Mammary epithelial cell (primary cell): ENCODE measurements at regions of chr7 and their contacts with region 1.

Region 1: DNA sequence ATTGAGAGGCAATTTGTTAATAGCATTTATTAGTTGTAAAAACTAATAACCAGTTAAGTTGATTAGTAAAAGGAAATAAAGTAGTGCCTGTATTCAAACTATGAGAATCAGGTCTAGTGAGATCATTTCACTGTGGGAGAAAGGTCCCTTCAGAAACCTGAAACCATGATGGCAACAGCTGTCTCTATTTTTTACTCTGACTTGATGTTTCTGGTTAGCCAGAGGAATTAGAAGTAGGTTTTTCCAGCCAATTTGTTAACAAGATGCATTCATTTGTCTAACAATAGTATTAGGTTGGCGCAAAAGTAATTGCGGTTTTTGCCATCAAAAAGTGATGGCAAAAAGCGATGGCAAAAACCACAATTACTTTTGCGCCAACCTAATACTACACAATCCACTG is 272.2 kb upstream of the YAE1 start:
- DNase-seq: no peak
- H3K4me3 ChIP-seq: no peak overlapping the region
- H3K27ac ChIP-seq: no peak overlapping the region
- H3K4me1 ChIP-seq: no peaks in the 10 kb centered on the region
- H3K27me3 ChIP-seq: no peaks in the 10 kb centered on the region
- CTCF ChIP-seq: no peak

Region 2: GRCh38 chr7:39252916-39253315 is 41.1 kb before region 1 on chr7:
- CTCF ChIA-PET with region 1: no interaction called
- dilution Hi-C with region 1: loop called (anchors 5 kb)
- in situ Hi-C with region 1: no loop called
- intact Hi-C with region 1: no loop called
- DNase-seq: no peak
- H3K4me3 ChIP-seq: no peak overlapping the region
- H3K27ac ChIP-seq: no peak overlapping the region
- H3K4me1 ChIP-seq: no peaks in the 10 kb centered on the region
- H3K27me3 ChIP-seq: no peaks in the 10 kb centered on the region
- CTCF ChIP-seq: no peak

Region 3: GRCh38 chr7:39321909-39322498 is 28.0 kb after region 1 on chr7:
- CTCF ChIA-PET with region 1: no interaction called
- dilution Hi-C with region 1: no loop called
- in situ Hi-C with region 1: no loop called
- intact Hi-C with region 1: no loop called
- DNase-seq: no peak
- H3K4me3 ChIP-seq: no peak overlapping the region
- H3K27ac ChIP-seq: no peak overlapping the region
- H3K4me1 ChIP-seq: no peaks in the 10 kb centered on the region
- H3K27me3 ChIP-seq: no peaks in the 10 kb centered on the region
- CTCF ChIP-seq: no peak